ENCODE measurements at regions of chr2 and their contacts with region 1.

Region 1: GRCh38 chr2:636641-637405 is 40.4 kb downstream of the TMEM18 start:
- DNase-seq: peak; percentile 73
- CTCF ChIP-seq: peak; percentile 86

Region 2: DNA sequence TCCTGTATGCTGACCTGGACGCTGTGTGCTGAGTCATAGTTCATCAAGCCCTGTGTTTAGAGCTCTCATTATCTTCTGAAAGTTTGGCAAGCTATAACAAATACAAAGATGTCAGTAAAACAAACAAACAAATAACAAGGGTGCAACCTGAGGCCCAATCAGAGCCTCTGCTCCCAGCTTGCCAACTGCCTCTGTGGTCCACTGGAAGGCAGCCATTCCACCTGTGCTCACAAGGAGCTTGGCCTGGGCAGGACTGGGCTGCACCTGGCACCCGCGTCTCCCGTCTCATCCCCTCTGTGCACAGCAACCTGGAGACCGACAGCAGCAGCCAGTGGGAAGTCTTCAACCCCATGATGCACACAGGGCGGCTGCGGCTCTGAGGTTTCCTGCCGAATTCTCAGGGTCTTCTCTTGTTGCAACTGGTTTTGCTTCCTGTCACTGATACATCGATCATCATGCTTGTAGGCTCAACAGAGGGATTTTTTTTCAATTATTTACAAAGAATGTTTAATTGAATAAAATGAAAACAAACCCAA is 57.4 kb before region 1 on chr2:
- CTCF ChIA-PET with region 1: no interaction called
- POLR2A ChIA-PET with region 1: no interaction called
- DNase-seq: no peak
- CTCF ChIP-seq: no peak

Region 3: DNA sequence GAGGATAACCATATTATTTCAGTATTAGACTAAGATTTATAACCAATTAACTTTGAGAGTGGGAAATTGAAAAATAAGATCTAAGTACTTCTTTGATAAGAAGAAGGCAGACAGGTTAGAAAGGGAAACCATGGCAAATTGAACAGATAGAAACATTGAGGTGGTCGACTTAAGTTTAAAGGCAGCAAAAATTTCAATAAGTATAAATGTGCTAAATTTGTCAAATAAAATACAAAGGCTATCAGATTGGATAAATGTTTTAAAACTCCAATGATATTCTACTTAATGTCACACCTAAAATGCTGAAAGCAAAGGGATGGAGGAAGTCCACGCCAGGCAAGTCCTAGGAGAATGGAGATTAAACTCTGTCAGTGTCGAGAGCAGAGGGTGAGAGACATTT is 18.8 kb before region 1 on chr2:
- CTCF ChIA-PET with region 1: no interaction called
- POLR2A ChIA-PET with region 1: no interaction called
- DNase-seq: no peak
- CTCF ChIP-seq: no peak

Region 4: GRCh38 chr2:650343-651310 is 13.8 kb after region 1 on chr2:
- CTCF ChIA-PET with region 1: interaction called, 13 read pairs
- POLR2A ChIA-PET with region 1: no interaction called
- DNase-seq: no peak
- CTCF ChIP-seq: no peak

Measured in GM10248 (cell line).